ENCODE measurements at regions of chr16 and their contacts with region 1.

Region 1: GRCh38 chr16:1420111-1420540 is 421 bp downstream of the UQCC4 start:
- DNase-seq: no peak
- ATAC-seq: no peak
- H3K4me3 Mint-ChIP-seq: peak overlapping the region; percentile 85
- H3K27ac Mint-ChIP-seq: peak overlapping the region; percentile 98
- H3K4me1 Mint-ChIP-seq: peaks cover 25% of the 10 kb centered on the region
- H3K27me3 Mint-ChIP-seq: no peaks in the 10 kb centered on the region
- CTCF ChIP-seq: no peak

Region 2: DNA sequence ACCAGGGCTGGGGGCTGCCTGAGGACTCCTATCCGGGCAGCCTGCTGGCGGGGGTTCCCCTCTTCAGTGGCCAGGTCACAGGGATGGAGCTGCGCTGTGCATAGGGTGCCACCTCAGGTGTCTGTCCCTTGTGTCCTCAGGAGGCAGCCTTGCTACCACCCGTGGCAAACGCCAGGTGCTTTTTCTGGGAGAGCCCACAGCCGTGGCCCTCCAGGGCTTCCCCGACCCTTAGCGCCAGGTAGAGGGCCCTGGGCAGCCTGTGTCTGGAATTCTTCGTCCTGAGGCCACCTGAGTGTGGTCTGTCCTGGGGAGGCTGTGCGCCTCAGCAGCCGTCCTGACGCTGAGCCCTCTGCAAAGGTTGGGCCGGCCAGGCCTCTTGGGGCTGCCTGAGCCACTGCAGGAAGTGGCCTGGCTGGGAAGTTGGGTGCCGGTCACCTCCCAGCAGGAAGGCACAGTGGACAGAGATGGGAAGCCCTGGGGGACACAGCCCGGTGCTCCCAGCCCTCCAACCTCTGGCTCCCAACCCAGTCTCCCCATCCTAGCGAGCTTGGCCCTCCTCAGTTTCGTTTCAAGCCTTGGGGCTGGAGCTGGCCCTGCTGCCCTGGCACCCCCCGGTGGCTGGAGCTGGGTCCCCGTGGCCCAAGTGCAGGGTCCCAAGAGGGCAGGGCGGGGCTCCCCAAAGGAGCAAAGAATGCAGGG is 94.3 kb before region 1 on chr16:
- CTCF ChIA-PET with region 1: no interaction called
- POLR2A ChIA-PET with region 1: interaction called, 12 read pairs
- intact Hi-C with region 1: no loop called
- DNase-seq: no peak
- ATAC-seq: peak; percentile 25
- H3K4me3 Mint-ChIP-seq: no peak overlapping the region
- H3K27ac Mint-ChIP-seq: no peak overlapping the region
- H3K4me1 Mint-ChIP-seq: peaks cover 4% of the 10 kb centered on the region
- H3K27me3 Mint-ChIP-seq: no peaks in the 10 kb centered on the region
- CTCF ChIP-seq: no peak

Region 3: GRCh38 chr16:1408171-1408837 is 11.8 kb before region 1 on chr16:
- CTCF ChIA-PET with region 1: no interaction called
- POLR2A ChIA-PET with region 1: interaction called, 23 read pairs
- intact Hi-C with region 1: loop called (anchors 1 kb)
- DNase-seq: peak; percentile 98
- ATAC-seq: peak; percentile 94
- H3K4me3 Mint-ChIP-seq: peak overlapping the region; percentile 80
- H3K27ac Mint-ChIP-seq: peak overlapping the region; percentile 56
- H3K4me1 Mint-ChIP-seq: peaks cover 30% of the 10 kb centered on the region
- H3K27me3 Mint-ChIP-seq: no peaks in the 10 kb centered on the region
- CTCF ChIP-seq: no peak

Region 4: GRCh38 chr16:1474796-1475551 is 54.8 kb after region 1 on chr16 and contains the start of gene CLCN7:
- CTCF ChIA-PET with region 1: no interaction called
- POLR2A ChIA-PET with region 1: interaction called, 22 read pairs
- intact Hi-C with region 1: loop called (anchors 1 kb)
- DNase-seq: peak; percentile 91
- ATAC-seq: peak; percentile 84
- H3K4me3 Mint-ChIP-seq: peak within 1 kb of the TSS; percentile 89
- H3K27ac Mint-ChIP-seq: peak within 1 kb of the TSS; percentile 92
- H3K4me1 Mint-ChIP-seq: peaks cover 63% of the 10 kb centered on the region
- H3K27me3 Mint-ChIP-seq: no peaks in the 10 kb centered on the region
- CTCF ChIP-seq: no peak
- total RNA-seq, gene CLCN7: 127 and 144 TPM in 2 replicates

Region 5: DNA sequence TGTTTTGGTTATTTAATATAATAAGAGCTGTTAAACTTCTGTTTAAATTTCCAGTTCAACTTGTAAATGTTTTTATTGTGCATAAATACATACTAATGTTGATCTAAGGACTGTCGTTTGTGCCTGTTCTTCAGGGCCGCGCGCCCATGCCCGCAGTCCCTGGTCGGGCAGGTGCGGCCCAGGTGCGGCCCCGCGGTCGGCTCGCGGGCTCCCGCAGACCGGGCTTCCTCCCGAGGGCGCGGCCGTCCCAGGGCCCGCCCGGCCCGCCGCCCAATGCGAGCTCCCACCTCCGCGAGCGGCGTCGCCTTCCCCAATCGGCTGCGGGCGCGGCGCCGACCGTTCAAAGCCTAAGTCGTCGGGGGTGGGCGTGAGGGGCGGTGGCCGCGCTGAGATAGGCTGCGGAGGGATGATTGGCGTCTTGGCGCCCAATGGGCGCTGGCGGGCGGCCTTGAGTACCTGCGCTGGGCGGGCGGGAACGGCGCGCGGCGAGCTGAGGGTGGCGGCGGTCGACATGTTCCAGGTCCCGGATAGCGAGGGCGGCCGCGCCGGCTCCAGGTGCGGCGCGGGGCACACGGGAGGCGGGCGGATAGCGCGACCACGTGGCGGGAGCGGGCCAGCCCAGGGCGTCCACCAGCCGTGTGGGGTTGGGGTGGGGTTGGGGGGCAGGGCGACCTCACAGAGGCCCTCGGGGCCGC is 257.8 kb after region 1 on chr16 and contains the start of gene JPT2:
- CTCF ChIA-PET with region 1: no interaction called
- POLR2A ChIA-PET with region 1: interaction called, 11 read pairs
- intact Hi-C with region 1: no loop called
- DNase-seq: peak; percentile 92
- ATAC-seq: peak; percentile 96
- H3K4me3 Mint-ChIP-seq: peak within 1 kb of the TSS; percentile 89
- H3K27ac Mint-ChIP-seq: peak within 1 kb of the TSS; percentile 76
- H3K4me1 Mint-ChIP-seq: peaks cover 29% of the 10 kb centered on the region
- H3K27me3 Mint-ChIP-seq: no peaks in the 10 kb centered on the region
- CTCF ChIP-seq: no peak
- total RNA-seq, gene JPT2: 43.4 and 48.7 TPM in 2 replicates

Measured in activated B cell treated with CpG ODN at 0.5 μM for 24 hours (primary cell).